Activated CD4-positive, alpha-beta T cell treated with anti-CD3 and anti-CD28 coated beads, Interleukin-2, amount 10 ng/mL, durations not matched to agents 24 days and 14 days (primary cell): ENCODE measurements at regions of chr1 and their contacts with region 1.

Region 1: DNA sequence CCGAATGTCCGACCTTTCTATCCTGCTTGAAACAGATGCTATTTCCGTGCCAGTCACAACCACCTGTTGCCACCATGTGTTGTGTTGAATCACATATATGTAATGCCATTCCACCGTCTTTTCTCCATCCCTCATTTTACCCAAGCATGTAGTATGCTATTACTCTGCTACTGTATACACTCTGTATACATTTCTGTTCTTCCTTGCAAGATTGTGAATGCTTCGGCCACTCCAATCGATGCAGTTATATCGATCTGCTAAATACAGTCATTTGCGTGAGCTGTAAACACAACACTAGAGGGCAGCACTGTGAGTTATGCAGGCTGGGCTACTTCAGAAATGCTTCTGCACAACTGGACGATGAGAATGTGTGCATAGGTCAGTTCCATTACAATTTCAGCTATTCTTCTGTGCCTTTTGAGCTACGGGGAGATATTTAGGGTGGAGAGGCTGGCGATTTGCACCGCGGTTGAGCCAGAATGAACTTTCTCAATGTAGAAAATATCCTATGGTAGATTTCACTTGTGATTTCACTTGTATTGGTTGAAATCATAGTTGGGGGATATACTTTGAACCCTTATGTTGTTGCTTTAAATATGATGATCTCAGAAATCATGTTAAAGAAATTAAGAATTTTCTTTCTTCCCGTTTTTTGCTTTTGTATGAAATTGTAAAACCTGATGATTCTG is 289.8 kb downstream of the NTNG1 start:
- DNase-seq: peak; percentile 76
- H3K4me3 Mint-ChIP-seq: no peak overlapping the region
- H3K27ac Mint-ChIP-seq: no peak overlapping the region
- H3K4me1 Mint-ChIP-seq: no peaks in the 10 kb centered on the region
- H3K27me3 Mint-ChIP-seq: peaks cover 8% of the 10 kb centered on the region

Region 2: GRCh38 chr1:107529502-107530149 is 98.9 kb after region 1 on chr1:
- intact Hi-C with region 1: loop called (anchors 2 kb)
- DNase-seq: peak; percentile 64
- H3K4me3 Mint-ChIP-seq: no peak overlapping the region
- H3K27ac Mint-ChIP-seq: no peak overlapping the region
- H3K4me1 Mint-ChIP-seq: no peaks in the 10 kb centered on the region
- H3K27me3 Mint-ChIP-seq: peaks cover 5% of the 10 kb centered on the region

Region 3: DNA sequence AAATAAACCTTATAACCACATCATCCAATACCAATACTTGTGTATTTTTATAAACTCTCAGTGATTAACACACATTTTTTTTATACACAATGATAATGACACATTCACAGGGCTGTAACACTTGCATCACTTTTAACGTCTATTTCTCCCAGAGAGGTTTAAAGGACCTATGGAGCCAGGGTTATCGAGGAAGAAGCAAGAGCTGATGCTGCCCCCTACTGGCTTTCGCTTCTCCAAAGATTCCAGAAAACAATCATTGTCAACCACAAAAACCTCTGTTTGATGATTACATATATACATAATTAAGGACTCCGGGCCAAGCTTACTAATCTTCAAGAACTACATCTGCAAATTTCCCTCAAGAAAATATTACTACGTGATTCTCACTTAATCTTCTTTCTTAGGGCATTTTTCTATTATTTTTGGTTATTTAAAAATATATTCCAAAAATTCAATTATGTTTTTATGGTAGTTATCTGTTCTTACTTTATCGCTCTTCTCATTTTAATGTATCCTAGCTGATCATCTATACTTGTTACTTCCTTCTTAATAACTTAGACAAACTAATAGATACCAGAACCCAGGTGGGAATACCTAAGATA is 319.8 kb after region 1 on chr1:
- intact Hi-C with region 1: loop called (anchors 1 kb)
- DNase-seq: peak; percentile 71
- H3K4me3 Mint-ChIP-seq: no peak overlapping the region
- H3K27ac Mint-ChIP-seq: no peak overlapping the region
- H3K4me1 Mint-ChIP-seq: no peaks in the 10 kb centered on the region
- H3K27me3 Mint-ChIP-seq: no peaks in the 10 kb centered on the region